Mammary epithelial cell (primary cell): ENCODE measurements at regions of chr2 and their contacts with region 1.

Region 1: GRCh38 chr2:84302513-84303412 is 156.3 kb downstream of the SUCLG1 start:
- DNase-seq: peak; percentile 46
- H3K4me3 ChIP-seq: no peak overlapping the region
- H3K27ac ChIP-seq: no peak overlapping the region
- H3K4me1 ChIP-seq: peaks cover 17% of the 10 kb centered on the region
- H3K27me3 ChIP-seq: no peaks in the 10 kb centered on the region
- CTCF ChIP-seq: peak; percentile 95 to 96

Region 2: DNA sequence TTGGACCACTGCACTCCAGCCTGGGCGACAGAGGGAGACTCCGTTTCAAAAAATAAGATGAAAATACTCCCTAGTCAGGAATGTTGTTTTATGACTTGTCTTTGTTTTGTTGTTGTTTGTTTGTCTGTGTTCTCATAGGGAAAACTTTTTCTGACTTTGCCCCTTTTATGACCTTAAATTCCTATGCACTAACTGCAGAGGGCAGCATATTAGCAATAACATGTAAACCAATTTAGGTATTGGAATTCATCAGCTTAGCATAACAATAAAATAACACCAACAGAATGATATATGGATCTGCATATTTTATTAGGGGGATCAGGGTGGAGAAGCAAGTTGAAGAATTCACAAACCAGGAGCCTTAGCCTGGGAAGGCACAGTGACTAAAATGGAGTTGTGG is 475.1 kb before region 1 on chr2:
- CTCF ChIA-PET with region 1: no interaction called
- dilution Hi-C with region 1: no loop called
- in situ Hi-C with region 1: loop called (anchors 10 to 25 kb)
- intact Hi-C with region 1: loop called (anchors 5 kb)
- DNase-seq: no peak
- H3K4me3 ChIP-seq: no peak overlapping the region
- H3K27ac ChIP-seq: no peak overlapping the region
- H3K4me1 ChIP-seq: no peaks in the 10 kb centered on the region
- H3K27me3 ChIP-seq: no peaks in the 10 kb centered on the region
- CTCF ChIP-seq: peak; percentile 42 to 62

Region 3: DNA sequence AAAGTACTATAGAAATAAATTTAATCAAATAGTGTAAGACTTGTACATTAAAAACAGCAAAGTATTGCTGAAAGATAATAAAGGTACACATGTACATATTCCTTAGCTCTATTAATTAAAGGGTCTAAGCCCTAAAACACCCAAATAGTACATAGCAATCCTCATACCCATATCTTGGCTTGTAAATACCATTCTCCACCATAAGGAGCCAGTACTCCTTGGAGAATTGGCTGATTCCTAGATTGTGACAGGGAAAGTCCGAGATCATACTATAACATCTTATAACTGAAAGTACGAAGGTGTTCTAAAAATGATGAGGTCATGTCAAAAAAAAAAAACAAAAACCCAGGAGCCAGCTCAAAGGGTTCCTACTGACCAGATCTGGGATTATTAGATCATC is 458.3 kb before region 1 on chr2:
- CTCF ChIA-PET with region 1: no interaction called
- dilution Hi-C with region 1: no loop called
- in situ Hi-C with region 1: loop called in 1 of 2 experiments (anchors 25 kb)
- intact Hi-C with region 1: loop called (anchors 5 kb)
- DNase-seq: no peak
- H3K4me3 ChIP-seq: no peak overlapping the region
- H3K27ac ChIP-seq: no peak overlapping the region
- H3K4me1 ChIP-seq: no peaks in the 10 kb centered on the region
- H3K27me3 ChIP-seq: no peaks in the 10 kb centered on the region
- CTCF ChIP-seq: peak; percentile 15 to 26

Region 4: GRCh38 chr2:84077492-84077891 is 225.3 kb before region 1 on chr2:
- CTCF ChIA-PET with region 1: interaction called, 5 read pairs
- dilution Hi-C with region 1: no loop called
- in situ Hi-C with region 1: no loop called
- intact Hi-C with region 1: loop called (anchors 1 kb)
- DNase-seq: peak; percentile 39
- H3K4me3 ChIP-seq: no peak overlapping the region
- H3K27ac ChIP-seq: no peak overlapping the region
- H3K4me1 ChIP-seq: no peaks in the 10 kb centered on the region
- H3K27me3 ChIP-seq: no peaks in the 10 kb centered on the region
- CTCF ChIP-seq: peak; percentile 47 to 65

Region 5: DNA sequence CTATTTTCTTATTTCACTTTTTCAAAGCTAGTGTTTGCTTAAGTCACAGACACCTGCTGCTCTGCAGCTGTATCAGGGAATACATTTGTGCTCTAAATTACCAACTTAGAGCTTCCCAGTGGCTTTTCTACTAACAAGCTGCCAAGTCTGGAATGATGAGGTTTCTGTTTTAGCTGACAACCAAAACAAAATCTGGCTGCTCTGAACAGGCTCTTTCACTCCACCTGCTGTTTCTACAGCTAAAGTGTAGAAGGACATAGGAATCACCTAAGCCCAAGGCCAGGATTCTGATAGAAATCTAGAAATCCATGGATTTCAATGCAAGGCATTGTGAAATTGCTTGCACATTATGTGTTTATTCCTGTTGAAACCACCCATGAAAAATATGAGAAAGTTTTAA is 44.9 kb before region 1 on chr2:
- CTCF ChIA-PET with region 1: no interaction called
- dilution Hi-C with region 1: no loop called
- in situ Hi-C with region 1: no loop called
- intact Hi-C with region 1: loop called (anchors 2 kb)
- DNase-seq: peak; percentile 28
- H3K4me3 ChIP-seq: no peak overlapping the region
- H3K27ac ChIP-seq: no peak overlapping the region
- H3K4me1 ChIP-seq: no peaks in the 10 kb centered on the region
- H3K27me3 ChIP-seq: peaks cover under 1% of the 10 kb centered on the region
- CTCF ChIP-seq: peak; percentile 31 to 58

Region 6: DNA sequence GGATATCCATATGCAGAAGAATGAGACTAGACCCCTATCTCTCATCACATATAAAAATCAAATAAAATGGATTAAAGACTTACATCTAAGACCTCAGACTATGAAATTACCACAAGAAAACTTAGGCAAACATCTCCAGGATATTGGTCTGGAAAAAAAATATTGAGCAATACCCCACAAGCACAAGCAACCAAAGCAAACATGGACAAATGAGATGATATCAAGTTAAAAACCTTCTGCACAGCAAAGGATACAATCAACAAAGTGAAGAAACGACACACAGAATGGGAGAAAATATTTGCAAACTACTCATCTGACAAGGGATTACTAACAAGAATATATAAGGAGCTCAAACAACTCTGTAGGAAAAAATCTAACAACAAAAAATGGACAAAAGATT is 33.1 kb after region 1 on chr2:
- CTCF ChIA-PET with region 1: no interaction called
- dilution Hi-C with region 1: no loop called
- in situ Hi-C with region 1: no loop called
- intact Hi-C with region 1: no loop called
- DNase-seq: no peak
- H3K4me3 ChIP-seq: no peak overlapping the region
- H3K27ac ChIP-seq: no peak overlapping the region
- H3K4me1 ChIP-seq: no peaks in the 10 kb centered on the region
- H3K27me3 ChIP-seq: no peaks in the 10 kb centered on the region
- CTCF ChIP-seq: no peak